Cardiac septum (tissue), 1 donor: ENCODE measurements at regions of chr9 and their contacts with region 1.

Region 1: GRCh38 chr9:129333953-129334724 is 156.1 kb upstream of the IER5L start:
- DNase-seq: peak; percentile 96

Region 2: GRCh38 chr9:129174085-129174723 is 159.9 kb before region 1 on chr9:
- intact Hi-C with region 1: loop called (anchors 2 kb)
- DNase-seq: peak; percentile 95

Region 3: DNA sequence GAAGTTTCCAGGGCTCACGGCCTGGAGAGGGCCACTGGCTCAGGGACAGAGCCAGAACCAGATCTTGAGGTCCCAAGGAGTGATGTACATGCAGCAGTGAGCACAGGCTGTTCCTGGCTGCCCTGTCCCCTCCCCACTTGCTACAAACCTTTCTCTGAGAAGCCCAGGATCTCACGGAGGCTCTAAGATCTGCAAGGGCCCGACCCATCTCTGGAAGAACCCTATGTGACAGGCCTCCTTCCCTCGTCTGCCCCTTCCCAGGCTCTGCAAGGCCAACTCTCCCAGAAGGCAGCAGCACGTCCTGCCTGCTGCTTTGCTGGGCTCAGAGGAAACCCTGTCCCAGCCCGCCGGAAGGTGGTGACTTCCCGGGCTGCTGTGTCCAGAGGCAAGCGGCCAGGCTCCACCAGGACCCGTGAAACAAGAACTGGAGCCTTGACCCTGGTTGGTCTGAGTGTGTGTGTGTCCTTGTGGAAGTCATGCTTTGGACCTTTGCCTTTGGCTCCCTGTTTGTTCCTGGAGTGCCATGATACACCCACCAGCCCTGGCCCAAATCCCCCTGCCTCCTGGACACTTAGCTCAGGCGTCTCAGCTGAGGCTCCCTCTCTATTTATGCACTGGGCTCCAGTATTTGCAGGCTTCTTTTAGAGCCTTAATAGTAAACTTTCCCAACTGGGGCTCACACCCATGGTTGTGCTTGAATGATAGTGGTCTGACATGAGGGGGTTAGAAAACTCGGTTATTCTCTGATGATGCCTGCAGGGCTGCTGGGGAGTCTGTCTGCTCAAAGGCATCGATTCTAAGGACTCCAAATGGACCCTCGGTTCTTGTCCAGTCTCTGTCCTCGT is 214.4 kb after region 1 on chr9:
- intact Hi-C with region 1: no loop called
- DNase-seq: peak; percentile 44